ENCODE measurements at regions of chr3 and their contacts with region 1.

Region 1: GRCh38 chr3:36957862-36958686 is 13.2 kb upstream of the TRANK1 start:
- DNase-seq: no peak
- ATAC-seq: peak; percentile 21
- H3K4me3 Mint-ChIP-seq: no peak overlapping the region
- H3K27ac Mint-ChIP-seq: no peak overlapping the region
- H3K4me1 Mint-ChIP-seq: peaks cover 16% of the 10 kb centered on the region
- H3K27me3 Mint-ChIP-seq: no peaks in the 10 kb centered on the region

Region 2: GRCh38 chr3:35965908-35966307 is 992.2 kb before region 1 on chr3:
- CTCF ChIA-PET with region 1: no interaction called
- POLR2A ChIA-PET with region 1: no interaction called
- intact Hi-C with region 1: loop called in 1 of 2 experiments (anchors 10 kb)
- DNase-seq: no peak
- ATAC-seq: no peak
- H3K4me3 Mint-ChIP-seq: no peak overlapping the region
- H3K27ac Mint-ChIP-seq: no peak overlapping the region
- H3K4me1 Mint-ChIP-seq: peaks cover 2% of the 10 kb centered on the region
- H3K27me3 Mint-ChIP-seq: peaks cover 2% of the 10 kb centered on the region

Region 3: GRCh38 chr3:36579746-36580145 is 378.3 kb before region 1 on chr3:
- CTCF ChIA-PET with region 1: no interaction called
- POLR2A ChIA-PET with region 1: no interaction called
- intact Hi-C with region 1: no loop called
- DNase-seq: no peak
- ATAC-seq: no peak
- H3K4me3 Mint-ChIP-seq: no peak overlapping the region
- H3K27ac Mint-ChIP-seq: no peak overlapping the region
- H3K4me1 Mint-ChIP-seq: no peaks in the 10 kb centered on the region
- H3K27me3 Mint-ChIP-seq: peaks cover 10% of the 10 kb centered on the region

Region 4: DNA sequence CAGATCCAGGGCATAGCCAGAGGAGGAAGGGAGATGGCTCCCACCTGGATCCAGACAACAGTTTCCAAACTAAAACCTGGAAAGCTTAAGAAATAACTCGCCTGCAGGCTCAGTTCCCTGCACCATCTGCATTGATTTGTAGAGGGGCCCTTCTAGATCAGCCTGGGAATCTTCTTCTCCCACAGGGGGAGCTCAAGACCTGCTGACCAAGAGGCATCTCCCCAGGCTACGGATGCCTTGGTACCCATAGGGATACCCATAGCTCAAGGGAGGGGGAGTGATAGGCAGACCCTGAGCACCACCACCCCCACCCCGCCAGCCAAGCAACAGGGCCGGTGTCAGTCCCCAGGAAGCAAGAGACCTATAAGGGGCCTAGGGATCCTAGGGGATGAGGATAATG is 165.7 kb before region 1 on chr3:
- CTCF ChIA-PET with region 1: interaction called, 9 read pairs
- POLR2A ChIA-PET with region 1: no interaction called
- intact Hi-C with region 1: loop called in 1 of 2 experiments (anchors 1 kb)
- DNase-seq: peak; percentile 36
- ATAC-seq: peak; percentile 33
- H3K4me3 Mint-ChIP-seq: no peak overlapping the region
- H3K27ac Mint-ChIP-seq: no peak overlapping the region
- H3K4me1 Mint-ChIP-seq: no peaks in the 10 kb centered on the region
- H3K27me3 Mint-ChIP-seq: peaks cover 4% of the 10 kb centered on the region

Region 5: DNA sequence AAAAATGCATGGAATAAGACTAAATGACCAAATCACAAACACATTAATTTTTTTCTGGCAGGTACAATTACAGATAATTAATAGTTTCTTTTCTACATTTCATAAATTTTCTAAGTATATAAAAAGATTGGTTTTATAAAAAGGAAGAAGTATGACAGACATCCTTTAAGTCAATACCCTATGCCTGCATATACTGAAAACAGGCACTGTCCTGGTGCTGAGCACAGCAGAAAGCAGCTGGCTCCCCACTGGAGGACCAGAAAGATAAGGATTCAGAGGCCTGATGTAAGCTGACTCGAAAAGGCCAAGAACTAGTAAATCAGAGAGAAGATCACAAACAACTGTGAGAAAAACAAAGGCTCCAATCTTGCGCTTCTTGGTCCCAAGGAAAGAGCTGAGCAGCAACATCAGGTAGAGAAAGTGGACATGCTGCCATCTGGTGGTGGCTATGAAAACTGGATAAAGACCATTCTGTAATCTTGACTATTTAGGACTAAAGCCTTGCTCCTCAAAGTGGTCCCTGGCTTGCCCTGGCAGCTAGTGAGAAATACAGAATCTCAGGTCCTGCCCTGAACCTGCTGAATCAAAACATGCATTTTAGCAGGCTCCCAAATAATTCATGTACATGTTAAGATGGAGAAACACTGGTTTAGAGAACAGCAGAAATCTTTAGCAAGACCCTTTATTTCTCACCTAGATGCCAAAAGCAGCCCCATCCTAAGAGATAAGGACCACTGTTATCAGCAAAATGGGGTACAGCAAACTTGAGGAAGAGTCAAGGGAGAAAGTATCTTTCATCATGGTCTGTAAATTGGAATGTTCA is 89.2 kb before region 1 on chr3:
- CTCF ChIA-PET with region 1: interaction called, 30 read pairs
- POLR2A ChIA-PET with region 1: no interaction called
- intact Hi-C with region 1: loop called (anchors 1 kb)
- DNase-seq: peak; percentile 68
- ATAC-seq: peak; percentile 87
- H3K4me3 Mint-ChIP-seq: no peak overlapping the region
- H3K27ac Mint-ChIP-seq: no peak overlapping the region
- H3K4me1 Mint-ChIP-seq: peaks cover 17% of the 10 kb centered on the region
- H3K27me3 Mint-ChIP-seq: no peaks in the 10 kb centered on the region

Region 6: DNA sequence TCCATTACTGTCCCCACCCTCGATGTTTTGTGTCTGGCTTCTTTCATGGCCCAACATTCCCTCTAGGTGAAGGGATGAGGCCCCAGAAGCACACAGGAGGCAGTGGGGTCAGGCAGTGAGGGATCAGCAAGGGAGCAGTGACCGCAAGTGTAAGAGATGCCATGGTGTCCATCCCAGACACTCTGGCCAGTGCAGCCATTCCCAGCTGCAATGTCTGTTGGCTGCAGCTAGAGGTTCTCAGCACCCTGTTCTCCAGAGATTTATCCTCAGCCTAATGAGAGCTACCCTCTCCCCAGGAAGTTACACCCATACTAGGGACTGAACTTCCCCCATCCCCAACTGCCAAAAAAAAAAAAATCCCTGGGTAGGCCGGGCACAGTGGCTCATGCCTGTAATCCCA is 53.4 kb before region 1 on chr3:
- CTCF ChIA-PET with region 1: interaction called, 33 read pairs
- POLR2A ChIA-PET with region 1: no interaction called
- intact Hi-C with region 1: loop called (anchors 1 to 2 kb)
- DNase-seq: no peak
- ATAC-seq: no peak
- H3K4me3 Mint-ChIP-seq: no peak overlapping the region
- H3K27ac Mint-ChIP-seq: no peak overlapping the region
- H3K4me1 Mint-ChIP-seq: peaks cover 78% of the 10 kb centered on the region
- H3K27me3 Mint-ChIP-seq: no peaks in the 10 kb centered on the region

Region 7: GRCh38 chr3:36944012-36944640 is 13.9 kb before region 1 on chr3:
- CTCF ChIA-PET with region 1: interaction called, 18 read pairs
- POLR2A ChIA-PET with region 1: no interaction called
- intact Hi-C with region 1: no loop called
- DNase-seq: peak; percentile 55
- ATAC-seq: peak; percentile 45
- H3K4me3 Mint-ChIP-seq: peak overlapping the region; percentile 75
- H3K27ac Mint-ChIP-seq: peak overlapping the region; percentile 51
- H3K4me1 Mint-ChIP-seq: peaks cover 11% of the 10 kb centered on the region
- H3K27me3 Mint-ChIP-seq: no peaks in the 10 kb centered on the region

Region 8: GRCh38 chr3:36993326-36994283 is 35.5 kb after region 1 on chr3 and contains the start of gene MLH1:
- CTCF ChIA-PET with region 1: interaction called, 16 read pairs
- POLR2A ChIA-PET with region 1: no interaction called
- intact Hi-C with region 1: no loop called
- DNase-seq: peak; percentile 98
- ATAC-seq: peak; percentile 90
- H3K4me3 Mint-ChIP-seq: no peak within 1 kb of the TSS
- H3K27ac Mint-ChIP-seq: no peak within 1 kb of the TSS
- H3K4me1 Mint-ChIP-seq: peaks cover 43% of the 10 kb centered on the region
- H3K27me3 Mint-ChIP-seq: no peaks in the 10 kb centered on the region
- total RNA-seq, gene MLH1: 89.0 to 135 TPM

Measured in activated CD4-positive, alpha-beta T cell treated with anti-CD3 and anti-CD28 coated beads for 36 hours (primary cell).